Activated CD4-positive, alpha-beta memory T cell treated with anti-CD3 and anti-CD28 coated beads for 36 hours (primary cell): ENCODE measurements at regions of chr11 and their contacts with region 1.

Region 1: DNA sequence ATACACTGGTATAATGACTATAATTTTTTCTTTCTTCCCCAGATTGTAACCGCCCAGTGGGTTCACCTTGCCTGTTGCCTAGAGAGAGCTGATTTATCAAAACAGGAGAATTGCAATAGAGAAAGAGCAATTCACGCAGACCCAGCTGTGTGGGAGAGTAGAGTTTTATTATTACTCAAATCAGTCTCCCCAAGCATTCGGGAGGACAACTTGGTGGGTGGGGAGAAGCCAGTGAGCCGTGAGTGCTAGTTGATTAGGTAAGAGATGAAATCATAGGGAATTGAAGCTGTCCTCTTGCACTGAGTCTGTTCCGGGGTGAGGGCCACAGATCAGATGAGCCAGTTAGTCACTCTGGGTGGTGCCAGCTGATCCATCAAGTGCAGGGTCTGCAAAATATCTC is 73.2 kb downstream of the SLC35F2 start:
- DNase-seq: peak; percentile 79
- H3K4me3 Mint-ChIP-seq: no peak overlapping the region
- H3K27ac Mint-ChIP-seq: peak overlapping the region; percentile 49
- H3K4me1 Mint-ChIP-seq: peaks cover 15% of the 10 kb centered on the region
- H3K27me3 Mint-ChIP-seq: no peaks in the 10 kb centered on the region

Region 2: DNA sequence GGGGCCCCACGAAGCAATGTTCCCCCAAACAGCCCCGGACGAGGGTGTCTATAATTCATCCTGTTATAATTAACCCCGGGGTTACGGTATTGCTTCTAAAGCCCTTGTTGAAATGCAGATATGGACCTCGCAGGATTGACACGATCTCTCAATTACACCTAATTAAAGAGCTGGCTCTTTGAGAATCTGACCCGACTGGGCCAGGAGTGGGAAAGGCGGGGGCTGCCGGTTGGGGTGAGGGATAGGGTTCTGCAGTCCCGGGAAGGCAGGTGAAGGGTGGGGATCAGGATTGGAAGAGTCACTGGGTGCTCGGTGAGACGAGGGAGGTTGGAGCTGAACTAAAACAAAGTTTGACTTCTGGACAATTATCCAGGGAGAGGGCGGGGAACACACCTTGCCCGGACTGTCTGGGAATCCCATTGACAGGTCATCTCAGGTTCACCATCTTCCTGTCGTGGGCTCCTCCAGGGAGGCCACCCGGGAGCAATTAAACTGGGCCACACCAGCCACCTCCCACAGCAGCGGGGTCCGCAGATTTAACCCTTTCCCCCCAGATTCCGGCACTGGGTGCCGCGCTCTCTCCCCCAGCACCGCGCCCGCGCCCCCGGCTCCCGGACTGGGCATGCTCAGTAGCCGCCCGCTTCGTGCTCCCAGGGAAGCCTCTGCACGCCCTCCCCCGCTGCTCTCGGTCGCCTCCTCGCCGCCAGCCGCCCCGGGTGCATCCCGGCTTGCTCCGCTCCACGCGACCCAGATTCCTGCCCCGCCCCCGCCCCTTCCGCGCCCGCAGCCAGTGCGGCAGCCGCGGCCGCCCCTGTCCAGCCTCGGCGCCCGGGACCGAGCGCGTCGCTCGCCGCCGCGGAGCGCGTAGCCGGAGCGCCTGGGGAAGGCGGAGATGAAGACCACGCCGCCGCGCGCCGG is 194.7 kb before region 1 on chr11 and contains the start of gene ELMOD1:
- CTCF ChIA-PET with region 1: no interaction called
- POLR2A ChIA-PET with region 1: no interaction called
- intact Hi-C with region 1: loop called (anchors 1 kb)
- DNase-seq: peak; percentile 59
- H3K4me3 Mint-ChIP-seq: peak within 1 kb of the TSS; percentile 76
- H3K27ac Mint-ChIP-seq: no peak within 1 kb of the TSS
- H3K4me1 Mint-ChIP-seq: peaks cover 26% of the 10 kb centered on the region
- H3K27me3 Mint-ChIP-seq: peaks cover 77% of the 10 kb centered on the region
- total RNA-seq, gene ELMOD1: 0.12 TPM in 1 of 2 experiments, not detected in the other

Region 3: GRCh38 chr11:107840129-107840484 is 54.7 kb after region 1 on chr11:
- CTCF ChIA-PET with region 1: interaction called, 5 read pairs
- POLR2A ChIA-PET with region 1: interaction called, 7 read pairs
- intact Hi-C with region 1: loop called (anchors 1 kb)
- DNase-seq: no peak
- H3K4me3 Mint-ChIP-seq: peak overlapping the region; percentile 53
- H3K27ac Mint-ChIP-seq: peak overlapping the region; percentile 98
- H3K4me1 Mint-ChIP-seq: peaks cover 71% of the 10 kb centered on the region
- H3K27me3 Mint-ChIP-seq: no peaks in the 10 kb centered on the region